ENCODE measurements at regions of chr5 and their contacts with region 1.

Region 1: DNA sequence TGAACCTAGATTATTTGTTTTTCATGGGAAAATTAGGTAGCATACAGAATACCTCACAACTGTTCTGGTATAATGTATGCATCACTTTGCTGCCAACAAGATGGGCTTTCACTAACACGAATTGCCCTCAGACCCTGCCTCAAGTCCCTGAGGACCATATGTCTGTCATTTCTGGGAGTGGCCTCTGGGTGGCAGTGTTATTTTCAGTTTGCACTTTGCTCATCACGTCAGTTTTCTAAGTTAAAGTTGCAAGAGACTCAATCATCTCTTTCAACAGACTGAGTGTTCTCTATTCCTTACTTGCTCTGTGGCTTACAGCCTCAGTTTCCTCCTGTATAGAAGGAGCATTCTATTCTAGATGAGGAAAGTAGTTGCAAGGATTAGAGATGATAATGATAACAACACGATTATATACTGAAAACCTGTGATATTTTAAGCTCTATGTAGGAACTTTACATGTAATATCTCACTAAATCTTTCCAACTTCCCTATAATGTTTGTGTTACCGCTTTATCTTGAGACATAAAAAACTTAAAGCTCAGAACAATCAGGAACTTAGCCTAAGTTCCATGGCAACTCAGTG is 55.7 kb downstream of the TSSK1B start:
- DNase-seq: peak in 1 of 2 donors; percentile 54
- ATAC-seq: peak; percentile 58

Region 2: GRCh38 chr5:113250341-113250953 is 128.6 kb before region 1 on chr5:
- intact Hi-C with region 1: no loop called
- DNase-seq: no peak
- ATAC-seq: no peak

Region 3: GRCh38 chr5:113425914-113426313 is 46.9 kb after region 1 on chr5:
- intact Hi-C with region 1: no loop called
- DNase-seq: no peak
- ATAC-seq: no peak

Region 4: DNA sequence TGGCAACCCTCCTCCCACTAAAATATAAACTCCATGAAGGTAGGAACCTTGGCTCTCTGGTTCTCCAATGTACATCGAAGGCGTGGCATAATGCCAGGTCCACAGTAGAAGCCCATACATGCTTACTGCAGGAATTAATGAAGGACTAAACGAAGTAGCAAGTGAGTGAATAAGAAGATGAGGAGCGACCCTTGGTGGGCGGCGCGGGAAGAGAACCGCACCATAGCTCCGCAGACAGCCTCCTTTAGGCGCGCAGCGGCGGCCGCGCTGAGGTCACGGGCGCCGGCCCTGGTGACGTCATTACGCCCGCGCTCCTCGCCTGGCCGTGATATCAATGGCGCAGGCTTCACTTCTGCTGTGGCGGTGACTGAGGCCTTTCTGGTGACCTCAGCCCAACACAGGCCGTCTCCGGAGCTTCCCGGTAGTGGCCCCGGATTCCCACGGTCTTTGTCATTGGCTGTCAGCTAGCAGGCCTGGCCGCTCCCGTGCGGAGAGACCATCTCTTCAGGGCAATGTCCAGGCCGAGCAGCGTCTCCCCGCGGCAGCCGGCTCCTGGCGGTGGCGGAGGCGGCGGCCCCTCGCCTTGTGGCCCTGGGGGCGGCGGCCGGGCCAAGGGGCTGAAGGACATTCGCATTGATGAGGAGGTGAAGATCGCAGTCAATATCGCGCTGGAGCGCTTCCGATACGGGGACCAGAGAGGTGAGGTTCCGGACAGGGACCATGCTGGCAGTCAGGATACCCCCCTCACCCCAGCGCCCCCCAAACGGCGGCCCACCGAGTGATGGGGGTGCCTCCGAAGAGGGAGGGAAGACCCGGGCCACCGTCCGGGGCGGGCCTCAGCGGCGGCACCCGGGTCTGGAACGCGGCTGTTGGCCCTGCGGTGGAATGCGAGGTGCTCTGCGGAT is 134.6 kb after region 1 on chr5 and contains the start of gene YTHDC2:
- intact Hi-C with region 1: loop called in 1 of 2 experiments (anchors 10 kb)
- DNase-seq: peak; percentile 83 to 90
- ATAC-seq: peak; percentile 96
- total RNA-seq, gene YTHDC2: 22.3 to 23.2 TPM

Region 5: DNA sequence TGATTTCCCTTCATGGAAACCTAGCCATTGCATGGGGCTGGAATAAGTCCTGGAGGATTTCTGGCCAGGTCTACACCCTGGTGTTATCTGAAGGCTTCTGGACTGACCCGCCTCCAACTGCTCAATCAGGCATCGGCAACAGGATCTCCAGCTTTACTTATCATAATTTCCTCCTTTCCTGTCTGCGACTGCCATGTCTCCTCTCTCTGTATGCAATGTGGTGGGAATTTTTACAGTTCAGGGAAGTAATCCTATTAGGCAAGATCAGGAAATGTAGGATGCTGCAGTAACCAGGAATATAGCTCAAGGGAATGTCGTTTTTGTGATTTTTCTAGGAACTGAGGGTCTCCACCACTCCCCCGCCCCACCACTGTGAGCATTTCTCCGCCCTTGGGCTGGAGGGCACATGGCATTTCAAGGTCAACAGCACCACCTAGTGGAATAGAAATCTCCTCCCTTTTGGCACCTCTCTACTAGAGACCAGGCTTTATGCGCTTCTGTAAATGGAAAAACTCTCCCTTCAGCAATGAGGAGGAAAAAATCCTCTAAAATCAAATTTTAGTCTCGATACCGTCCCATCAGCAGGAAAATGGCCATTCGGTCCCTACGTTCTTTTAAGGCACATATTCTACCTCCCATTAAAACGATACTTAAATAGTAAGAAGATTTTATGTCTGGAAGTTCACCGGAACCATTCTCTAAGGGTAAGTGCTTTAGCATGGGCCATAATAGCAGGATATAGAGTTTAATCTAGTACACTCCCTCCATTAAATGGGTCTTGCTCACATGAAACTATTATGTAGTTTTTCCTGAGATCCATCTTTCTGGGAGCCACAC is 227.5 kb after region 1 on chr5:
- intact Hi-C with region 1: loop called in 1 of 2 experiments (anchors 5 kb)
- DNase-seq: peak in 1 of 2 donors; percentile 21
- ATAC-seq: peak; percentile 77